ENCODE measurements at regions of chr12 and their contacts with region 1.

Region 1: GRCh38 chr12:63862214-63863107 is 18.0 kb downstream of the SRGAP1 start:
- DNase-seq: no peak
- ATAC-seq: no peak
- H3K4me3 ChIP-seq: no peak overlapping the region
- H3K27ac ChIP-seq: no peak overlapping the region
- H3K4me1 ChIP-seq: no peaks in the 10 kb centered on the region
- H3K27me3 ChIP-seq: no peaks in the 10 kb centered on the region

Region 2: GRCh38 chr12:63897931-63898330 is 35.5 kb after region 1 on chr12:
- intact Hi-C with region 1: no loop called
- DNase-seq: no peak
- ATAC-seq: no peak
- H3K4me3 ChIP-seq: no peak overlapping the region
- H3K27ac ChIP-seq: no peak overlapping the region
- H3K4me1 ChIP-seq: no peaks in the 10 kb centered on the region
- H3K27me3 ChIP-seq: no peaks in the 10 kb centered on the region

Region 3: DNA sequence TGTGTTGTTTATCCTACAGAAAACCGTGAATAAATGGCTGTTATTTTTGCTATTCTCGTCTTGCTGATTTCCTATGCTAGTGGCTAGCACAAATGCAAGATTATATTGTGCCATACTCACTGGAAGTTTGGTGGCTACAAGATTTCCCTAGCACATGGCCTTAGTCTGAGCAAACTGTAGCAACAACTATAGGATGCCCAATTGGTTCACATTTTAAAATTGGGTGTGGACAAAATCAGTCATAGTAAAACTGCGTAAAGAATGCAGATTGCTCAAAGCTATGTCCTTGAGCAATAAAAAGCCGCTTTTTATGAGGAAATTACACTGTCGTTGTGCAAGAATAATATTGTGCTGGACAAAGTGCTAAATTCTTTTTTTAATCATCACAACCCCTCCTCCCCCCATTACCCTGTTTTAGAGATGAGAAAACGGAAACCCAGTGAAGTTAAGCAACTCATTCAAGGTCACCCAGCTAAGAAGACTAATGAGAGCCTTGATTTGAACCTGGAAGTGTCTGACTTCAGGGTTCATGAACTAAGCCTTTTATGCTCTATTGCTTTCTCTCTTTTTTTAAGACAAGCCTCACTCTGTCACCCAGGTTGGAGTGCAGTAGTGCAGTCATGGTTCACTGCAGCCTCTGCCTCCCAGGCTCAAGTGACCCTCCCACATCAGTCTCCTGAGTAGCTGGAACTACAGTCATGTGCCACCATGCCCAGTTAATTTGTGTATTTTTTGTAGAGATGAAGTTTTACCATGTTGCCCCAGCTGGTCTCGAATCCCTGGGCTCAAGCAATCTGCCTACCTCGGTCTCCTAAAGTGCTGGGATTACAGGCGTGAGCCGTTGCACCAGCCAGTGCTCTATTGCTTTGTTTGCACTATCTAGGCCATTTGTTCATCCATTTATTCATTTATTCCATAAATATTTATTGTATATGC is 55.7 kb after region 1 on chr12:
- intact Hi-C with region 1: loop called in 1 of 2 experiments (anchors 5 kb)
- DNase-seq: no peak
- ATAC-seq: peak; percentile 30
- H3K4me3 ChIP-seq: no peak overlapping the region
- H3K27ac ChIP-seq: no peak overlapping the region
- H3K4me1 ChIP-seq: peaks cover 2% of the 10 kb centered on the region in 2 donors
- H3K27me3 ChIP-seq: no peaks in the 10 kb centered on the region

Region 4: GRCh38 chr12:64083285-64084210 is 221.1 kb after region 1 on chr12:
- intact Hi-C with region 1: no loop called
- DNase-seq: peak in 1 of 2 donors; percentile 84
- ATAC-seq: peak; percentile 89
- H3K4me3 ChIP-seq: no peak overlapping the region
- H3K27ac ChIP-seq: no peak overlapping the region
- H3K4me1 ChIP-seq: peaks cover 5% of the 10 kb centered on the region in 2 donors
- H3K27me3 ChIP-seq: no peaks in the 10 kb centered on the region

Region 5: GRCh38 chr12:64625243-64626077 is 763.0 kb after region 1 on chr12:
- intact Hi-C with region 1: no loop called
- DNase-seq: peak; percentile 84
- ATAC-seq: peak; percentile 87
- H3K4me3 ChIP-seq: no peak overlapping the region
- H3K27ac ChIP-seq: peak overlapping the region; percentile 10 to 49
- H3K4me1 ChIP-seq: peaks cover 5 to 7% of the 10 kb centered on the region in 2 donors
- H3K27me3 ChIP-seq: no peaks in the 10 kb centered on the region

Measured in aorta (tissue), 5 donors.